Activated B cell treated with CpG ODN at 0.5 μM for 24 hours (primary cell): ENCODE measurements at regions of chr4 and their contacts with region 1.

Region 1: DNA sequence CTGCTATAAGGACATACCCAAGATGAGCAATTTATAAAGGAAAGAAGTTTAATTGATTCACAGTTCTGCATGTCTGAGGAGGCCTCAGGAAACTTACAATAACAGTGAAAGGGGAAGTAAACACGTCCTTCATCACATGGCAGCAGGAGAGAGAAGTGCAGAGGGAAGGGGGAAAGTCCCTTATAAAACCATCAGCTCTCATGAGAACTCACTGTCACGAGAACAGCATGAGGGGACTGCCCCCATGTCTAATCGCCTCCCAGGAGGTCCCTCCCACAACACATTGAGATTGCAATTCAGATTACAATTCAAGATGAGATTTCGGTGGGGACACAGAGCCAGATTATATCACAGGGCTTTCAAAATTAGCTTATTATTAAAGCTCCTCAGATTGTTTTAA is 209.5 kb upstream of the PPP3CA start:
- DNase-seq: no peak
- ATAC-seq: peak; percentile 98
- H3K4me3 Mint-ChIP-seq: peak overlapping the region; percentile 16
- H3K27ac Mint-ChIP-seq: peak overlapping the region; percentile 83
- H3K4me1 Mint-ChIP-seq: peaks cover 12% of the 10 kb centered on the region
- H3K27me3 Mint-ChIP-seq: no peaks in the 10 kb centered on the region
- CTCF ChIP-seq: no peak

Region 2: GRCh38 chr4:101169044-101170014 is 387.5 kb before region 1 on chr4:
- CTCF ChIA-PET with region 1: no interaction called
- POLR2A ChIA-PET with region 1: no interaction called
- intact Hi-C with region 1: no loop called
- DNase-seq: no peak
- ATAC-seq: peak; percentile 99
- H3K4me3 Mint-ChIP-seq: no peak overlapping the region
- H3K27ac Mint-ChIP-seq: no peak overlapping the region
- H3K4me1 Mint-ChIP-seq: peaks cover 21% of the 10 kb centered on the region
- H3K27me3 Mint-ChIP-seq: no peaks in the 10 kb centered on the region
- CTCF ChIP-seq: no peak

Region 3: DNA sequence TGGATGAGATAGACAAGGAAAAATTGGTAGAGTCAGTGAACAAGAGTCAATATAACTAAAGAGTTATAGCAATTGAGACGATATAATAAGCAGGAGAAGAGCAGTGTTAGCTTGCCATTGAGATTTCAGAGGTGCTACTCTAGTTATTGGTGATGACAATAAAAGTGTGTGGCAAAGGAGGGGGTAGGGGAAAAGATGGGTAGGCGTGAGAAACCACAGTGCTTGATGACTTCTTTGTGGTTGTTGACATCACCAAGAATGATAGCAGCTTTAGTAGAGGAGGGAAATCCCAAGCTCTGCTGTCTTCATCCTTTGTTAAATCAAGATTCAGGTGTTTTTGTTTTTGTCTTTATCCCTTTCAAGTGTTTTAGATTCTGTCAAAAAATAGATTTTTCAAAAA is 29.7 kb before region 1 on chr4:
- CTCF ChIA-PET with region 1: no interaction called
- POLR2A ChIA-PET with region 1: interaction called, 3 read pairs
- intact Hi-C with region 1: loop called (anchors 1 kb)
- DNase-seq: no peak
- ATAC-seq: peak; percentile 98
- H3K4me3 Mint-ChIP-seq: no peak overlapping the region
- H3K27ac Mint-ChIP-seq: peak overlapping the region; percentile 9
- H3K4me1 Mint-ChIP-seq: peaks cover 15% of the 10 kb centered on the region
- H3K27me3 Mint-ChIP-seq: no peaks in the 10 kb centered on the region
- CTCF ChIP-seq: no peak